Activated B cell treated with CpG ODN at 0.5 μM for 24 hours (primary cell): ENCODE measurements at regions of chr2 and their contacts with region 1.

Region 1: GRCh38 chr2:17107151-17107550 is 411.1 kb downstream of the RAD51AP2 start:
- DNase-seq: no peak
- ATAC-seq: no peak
- H3K4me3 Mint-ChIP-seq: no peak overlapping the region
- H3K27ac Mint-ChIP-seq: no peak overlapping the region
- H3K4me1 Mint-ChIP-seq: peaks cover 42% of the 10 kb centered on the region
- H3K27me3 Mint-ChIP-seq: no peaks in the 10 kb centered on the region
- CTCF ChIP-seq: no peak

Region 2: GRCh38 chr2:17124575-17125318 is 17.6 kb after region 1 on chr2:
- CTCF ChIA-PET with region 1: no interaction called
- POLR2A ChIA-PET with region 1: interaction called, 5 read pairs
- intact Hi-C with region 1: loop called (anchors 2 kb)
- DNase-seq: no peak
- ATAC-seq: peak; percentile 56
- H3K4me3 Mint-ChIP-seq: no peak overlapping the region
- H3K27ac Mint-ChIP-seq: no peak overlapping the region
- H3K4me1 Mint-ChIP-seq: peaks cover 3% of the 10 kb centered on the region
- H3K27me3 Mint-ChIP-seq: no peaks in the 10 kb centered on the region
- CTCF ChIP-seq: no peak